PC-9 (cell line): ENCODE measurements at regions of chr2 and their contacts with region 1.

Region 1: GRCh38 chr2:217707131-217707667 is 295.6 kb downstream of the TNS1 start:
- DNase-seq: peak; percentile 69 to 82
- H3K4me3 ChIP-seq: no peak overlapping the region
- H3K27ac ChIP-seq: peak overlapping the region; percentile 33; the same call in 1 of the 2 replicates
- H3K4me1 ChIP-seq: peaks cover 33% of the 10 kb centered on the region
- H3K27me3 ChIP-seq: no peaks in the 10 kb centered on the region
- CTCF ChIP-seq: no peak

Region 2: DNA sequence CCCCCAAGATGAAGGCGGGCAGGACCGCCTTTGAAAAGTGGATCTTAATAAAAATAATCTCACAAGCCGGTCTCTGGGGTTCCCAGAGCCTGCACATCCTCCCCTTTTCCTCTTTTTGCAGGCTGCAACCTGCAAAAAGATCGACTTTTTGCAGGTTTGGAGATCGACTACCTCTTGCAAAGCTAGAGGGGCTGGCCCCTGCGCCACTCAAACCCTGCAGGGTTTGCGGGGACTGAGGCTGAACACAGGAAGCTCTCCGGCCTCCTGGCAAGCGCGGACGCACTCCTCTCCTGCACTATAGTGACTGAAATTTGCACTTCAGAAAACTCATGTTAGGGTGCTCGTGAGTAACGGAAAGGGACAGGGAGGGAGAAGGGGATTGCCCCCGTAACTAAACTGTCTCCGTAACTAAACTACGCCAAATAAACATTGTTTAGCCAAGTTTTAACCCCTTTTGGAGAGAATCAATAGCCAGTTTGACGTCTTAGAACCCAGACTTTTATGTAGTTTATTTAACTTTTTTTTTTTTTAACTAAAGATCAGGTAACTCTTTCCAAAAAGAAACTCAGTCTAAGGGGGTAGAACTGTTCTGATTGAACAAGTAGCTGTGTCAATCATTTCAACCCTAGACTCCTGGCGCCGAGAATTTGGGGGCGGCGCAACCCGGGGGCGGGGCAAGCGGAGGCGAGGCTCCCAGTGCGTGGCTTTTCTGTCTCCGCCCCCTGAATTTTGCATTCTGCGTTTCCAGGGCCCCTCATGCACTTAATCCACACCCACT is 1014.4 kb before region 1 on chr2:
- CTCF ChIA-PET with region 1: no interaction called
- POLR2A ChIA-PET with region 1: no interaction called
- intact Hi-C with region 1: loop called (anchors 2 kb)
- DNase-seq: peak in 1 of 2 experiments; percentile 77
- H3K4me3 ChIP-seq: peak overlapping the region; percentile 49; the same call in 1 of the 2 replicates
- H3K27ac ChIP-seq: no peak overlapping the region
- H3K4me1 ChIP-seq: peaks cover 3% of the 10 kb centered on the region; the same call in 1 of the 2 replicates
- H3K27me3 ChIP-seq: no peaks in the 10 kb centered on the region
- CTCF ChIP-seq: no peak

Region 3: GRCh38 chr2:217370391-217370790 is 336.8 kb before region 1 on chr2:
- CTCF ChIA-PET with region 1: no interaction called
- POLR2A ChIA-PET with region 1: interaction called, 15 read pairs
- intact Hi-C with region 1: loop called (anchors 5 kb)
- DNase-seq: peak; percentile 32 to 79
- H3K4me3 ChIP-seq: no peak overlapping the region
- H3K27ac ChIP-seq: no peak overlapping the region
- H3K4me1 ChIP-seq: peaks cover 53% of the 10 kb centered on the region
- H3K27me3 ChIP-seq: no peaks in the 10 kb centered on the region
- CTCF ChIP-seq: no peak

Region 4: GRCh38 chr2:217650716-217651360 is 56.4 kb before region 1 on chr2:
- CTCF ChIA-PET with region 1: interaction called, 11 read pairs
- POLR2A ChIA-PET with region 1: interaction called, 3 read pairs
- intact Hi-C with region 1: loop called (anchors 1 kb)
- DNase-seq: peak in 1 of 2 experiments; percentile 12
- H3K4me3 ChIP-seq: no peak overlapping the region
- H3K27ac ChIP-seq: no peak overlapping the region
- H3K4me1 ChIP-seq: peaks cover 15% of the 10 kb centered on the region
- H3K27me3 ChIP-seq: no peaks in the 10 kb centered on the region
- CTCF ChIP-seq: peak; percentile 66

Region 5: GRCh38 chr2:217672491-217672900 is 34.7 kb before region 1 on chr2:
- CTCF ChIA-PET with region 1: no interaction called
- POLR2A ChIA-PET with region 1: interaction called, 16 read pairs
- intact Hi-C with region 1: loop called (anchors 1 kb)
- DNase-seq: peak; percentile 63 to 89
- H3K4me3 ChIP-seq: no peak overlapping the region
- H3K27ac ChIP-seq: peak overlapping the region; percentile 58; the same call in 1 of the 2 replicates
- H3K4me1 ChIP-seq: peaks cover 18% of the 10 kb centered on the region
- H3K27me3 ChIP-seq: no peaks in the 10 kb centered on the region
- CTCF ChIP-seq: no peak

Region 6: DNA sequence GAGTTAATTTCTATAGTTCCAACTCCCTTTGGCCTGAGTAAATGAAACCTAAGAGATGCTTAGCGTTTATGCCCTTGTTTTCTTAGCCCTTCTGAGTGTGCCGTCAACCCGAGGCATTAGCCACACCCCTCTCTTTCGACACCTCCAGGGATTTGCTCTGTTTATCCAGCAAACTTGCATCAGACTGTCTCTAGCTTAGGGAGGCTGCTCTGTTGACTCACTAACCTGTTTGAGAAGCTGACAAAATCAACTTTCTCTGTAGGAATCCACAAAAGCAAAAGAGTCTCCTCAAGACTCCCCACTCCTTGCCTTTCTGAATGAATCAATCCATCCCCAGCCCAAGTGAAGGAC is 22.0 kb before region 1 on chr2:
- CTCF ChIA-PET with region 1: no interaction called
- POLR2A ChIA-PET with region 1: no interaction called
- intact Hi-C with region 1: loop called (anchors 2 kb)
- DNase-seq: peak; percentile 80 to 97
- H3K4me3 ChIP-seq: no peak overlapping the region
- H3K27ac ChIP-seq: peak overlapping the region; percentile 74
- H3K4me1 ChIP-seq: peaks cover 27% of the 10 kb centered on the region
- H3K27me3 ChIP-seq: no peaks in the 10 kb centered on the region
- CTCF ChIP-seq: no peak